Heart right ventricle (tissue), 16 donors: ENCODE measurements at regions of chr17 and their contacts with region 1.

Region 1: GRCh38 chr17:29777663-29778062 is 152.4 kb downstream of the SSH2 start:
- DNase-seq: no peak
- ATAC-seq: no peak
- H3K4me3 ChIP-seq: no peak overlapping the region
- H3K27ac ChIP-seq: no peak overlapping the region
- H3K4me1 ChIP-seq: peaks cover 0 to 14% (median 9%) of the 10 kb centered on the region in 9 donors
- H3K27me3 ChIP-seq: no peaks in the 10 kb centered on the region
- CTCF ChIP-seq: no peak

Region 2: DNA sequence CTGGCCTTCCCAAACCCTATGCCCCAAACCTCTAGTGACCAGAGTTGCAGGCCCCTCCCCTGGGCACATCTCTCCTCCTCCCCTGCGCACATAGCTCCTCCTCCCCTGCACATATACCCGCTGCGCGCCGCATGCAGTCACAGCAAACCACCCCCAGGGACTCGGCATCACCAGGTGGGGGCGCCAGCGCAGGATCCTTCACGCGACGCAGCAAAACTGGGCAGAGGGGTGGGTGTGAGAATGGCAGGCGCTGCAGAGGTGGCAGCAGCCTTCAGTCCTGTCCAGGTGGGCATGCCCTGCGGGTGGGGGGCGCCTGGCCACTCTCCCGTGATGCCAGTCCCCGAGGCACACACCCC is 160.6 kb before region 1 on chr17:
- intact Hi-C with region 1: loop called in 2 of 10 experiments (anchors 5 to 10 kb)
- DNase-seq: peak; percentile 56 to 75
- ATAC-seq: no peak
- H3K4me3 ChIP-seq: peak overlapping the region in 7 of 10 donors; percentile 19 to 59 (median 39)
- H3K27ac ChIP-seq: peak overlapping the region in 1 of 10 donors; percentile 83
- H3K4me1 ChIP-seq: peaks cover 14 to 95% (median 77%) of the 10 kb centered on the region in 9 donors
- H3K27me3 ChIP-seq: peaks cover 0 to 46% (median 0%) of the 10 kb centered on the region in 7 donors
- CTCF ChIP-seq: peak in 7 of 9 donors; percentile 26 to 73 (median 41)

Region 3: GRCh38 chr17:29640413-29640812 is 137.2 kb before region 1 on chr17:
- intact Hi-C with region 1: loop called (anchors 1 to 5 kb)
- DNase-seq: peak in 1 of 2 donors; percentile 23
- ATAC-seq: peak in 6 of 8 donors; percentile 21 to 48 (median 38)
- H3K4me3 ChIP-seq: peak overlapping the region in 1 of 10 donors; percentile 9
- H3K27ac ChIP-seq: peak overlapping the region; percentile 37 to 86 (median 74)
- H3K4me1 ChIP-seq: peaks cover 36 to 70% (median 66%) of the 10 kb centered on the region in 9 donors
- H3K27me3 ChIP-seq: no peaks in the 10 kb centered on the region
- CTCF ChIP-seq: no peak

Region 4: GRCh38 chr17:29645515-29646051 is 132.1 kb before region 1 on chr17:
- intact Hi-C with region 1: loop called in 2 of 10 experiments (anchors 2 kb)
- DNase-seq: peak; percentile 49 to 61
- ATAC-seq: peak; percentile 54 to 90 (median 83)
- H3K4me3 ChIP-seq: no peak overlapping the region
- H3K27ac ChIP-seq: peak overlapping the region; percentile 68 to 86 (median 77)
- H3K4me1 ChIP-seq: peaks cover 35 to 62% (median 59%) of the 10 kb centered on the region in 9 donors
- H3K27me3 ChIP-seq: no peaks in the 10 kb centered on the region
- CTCF ChIP-seq: no peak

Region 5: DNA sequence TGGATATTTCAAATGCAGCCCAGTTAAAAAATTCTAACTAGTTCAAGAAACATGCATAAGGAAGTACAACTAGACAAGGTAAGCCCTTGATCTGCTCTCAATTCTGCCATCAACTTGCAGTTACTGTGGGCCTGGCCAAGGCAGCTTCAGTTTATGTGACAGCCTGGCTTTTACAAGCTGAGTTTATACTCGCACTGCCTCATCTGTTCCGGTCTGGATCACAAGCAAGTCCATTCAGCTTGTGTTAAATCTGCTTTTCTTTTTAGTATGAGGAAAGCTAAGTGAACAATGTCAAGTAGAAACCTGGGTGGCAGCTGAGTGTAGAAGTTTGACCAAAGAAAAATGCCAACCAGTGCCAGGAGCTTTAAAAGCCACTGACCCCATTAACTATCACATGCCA is 78.4 kb before region 1 on chr17:
- intact Hi-C with region 1: no loop called
- DNase-seq: no peak
- ATAC-seq: peak in 5 of 8 donors; percentile 28 to 62 (median 52)
- H3K4me3 ChIP-seq: no peak overlapping the region
- H3K27ac ChIP-seq: peak overlapping the region; percentile 33 to 72 (median 61)
- H3K4me1 ChIP-seq: peaks cover 12 to 54% (median 29%) of the 10 kb centered on the region in 9 donors
- H3K27me3 ChIP-seq: no peaks in the 10 kb centered on the region
- CTCF ChIP-seq: no peak